ENCODE measurements at regions of chr5 and their contacts with region 1.

Region 1: DNA sequence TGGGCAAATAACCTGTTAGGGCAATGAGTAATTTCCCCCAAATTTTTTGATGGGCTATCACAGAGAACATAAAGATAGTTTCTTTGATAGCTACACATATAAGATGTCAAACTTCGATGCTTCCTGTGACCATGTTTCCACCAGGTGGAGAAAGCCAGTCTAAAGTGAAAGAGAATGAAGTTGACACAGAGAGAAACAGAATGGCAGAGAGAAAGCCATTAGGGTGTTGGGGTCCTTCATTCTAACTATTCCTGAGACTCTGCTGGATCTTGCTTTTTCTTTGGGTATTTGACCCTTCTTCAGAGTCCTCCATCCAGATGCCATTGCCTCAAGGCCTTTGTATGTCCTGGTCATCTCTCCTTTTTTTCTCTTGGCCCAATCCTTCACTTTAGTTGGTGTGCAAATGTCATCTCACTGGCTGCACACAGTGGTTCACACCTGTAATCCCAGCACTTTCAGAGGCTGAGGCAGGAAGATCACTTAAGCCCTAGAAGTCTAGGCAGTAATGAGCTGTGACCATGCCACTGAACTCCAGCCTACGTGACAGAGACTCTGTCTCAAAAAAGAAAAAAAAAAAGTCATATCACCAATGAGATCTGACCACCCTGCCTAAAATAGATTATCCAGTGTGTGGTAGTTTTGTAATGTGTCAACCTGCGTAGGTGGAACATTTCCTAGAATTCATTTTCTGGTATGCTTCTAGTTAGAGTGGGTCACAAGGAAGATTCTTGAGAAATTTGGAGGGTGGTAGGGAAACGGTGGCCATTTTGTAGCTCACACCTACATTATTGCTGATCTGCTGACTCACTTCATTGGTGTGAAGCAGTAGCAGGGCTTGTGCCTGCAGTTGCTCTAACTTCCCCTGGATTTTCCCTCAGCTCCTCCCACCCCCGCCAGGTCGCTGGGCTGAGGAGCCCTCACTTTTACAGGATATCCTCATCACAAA is 20.8 kb upstream of the KIF2A start:
- DNase-seq: peak; percentile 86
- ATAC-seq: peak; percentile 86
- H3K4me3 Mint-ChIP-seq: peak overlapping the region; percentile 37
- H3K27ac Mint-ChIP-seq: peak overlapping the region; percentile 95
- H3K4me1 Mint-ChIP-seq: peaks cover 75% of the 10 kb centered on the region
- H3K27me3 Mint-ChIP-seq: no peaks in the 10 kb centered on the region
- CTCF ChIP-seq: no peak

Region 2: DNA sequence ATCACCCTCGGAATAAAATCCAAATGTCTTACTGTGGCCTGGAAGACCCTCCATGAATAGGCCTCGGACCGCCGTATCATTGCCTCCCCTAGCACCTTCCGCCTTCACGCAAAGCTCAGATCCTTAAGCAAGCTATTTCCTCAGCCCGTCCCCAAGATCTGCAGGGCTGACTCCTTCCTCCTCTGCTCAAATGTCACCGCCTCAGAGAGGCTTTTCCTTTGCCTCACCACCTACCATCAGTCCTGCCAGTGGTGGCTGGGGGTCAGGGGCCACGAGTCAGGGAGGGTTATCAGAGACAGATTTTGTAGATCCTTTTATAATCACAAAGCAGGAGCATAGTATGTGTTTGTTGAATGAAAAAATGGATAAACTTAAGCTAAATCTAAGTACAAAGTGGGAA is 53.6 kb before region 1 on chr5:
- CTCF ChIA-PET with region 1: no interaction called
- POLR2A ChIA-PET with region 1: interaction called, 3 read pairs
- intact Hi-C with region 1: loop called (anchors 10 kb)
- DNase-seq: no peak
- ATAC-seq: no peak
- H3K4me3 Mint-ChIP-seq: no peak overlapping the region
- H3K27ac Mint-ChIP-seq: no peak overlapping the region
- H3K4me1 Mint-ChIP-seq: peaks cover 31% of the 10 kb centered on the region
- H3K27me3 Mint-ChIP-seq: peaks cover 1% of the 10 kb centered on the region
- CTCF ChIP-seq: no peak

Region 3: GRCh38 chr5:62297026-62297425 is 11.8 kb after region 1 on chr5:
- CTCF ChIA-PET with region 1: interaction called, 18 read pairs
- POLR2A ChIA-PET with region 1: interaction called, 21 read pairs
- intact Hi-C with region 1: no loop called
- DNase-seq: peak; percentile 45
- ATAC-seq: peak; percentile 64
- H3K4me3 Mint-ChIP-seq: peak overlapping the region; percentile 2
- H3K27ac Mint-ChIP-seq: peak overlapping the region; percentile 77
- H3K4me1 Mint-ChIP-seq: peaks cover 66% of the 10 kb centered on the region
- H3K27me3 Mint-ChIP-seq: no peaks in the 10 kb centered on the region
- CTCF ChIP-seq: no peak